Endothelial cell of umbilical vein (primary cell): ENCODE measurements at regions of chr3 and their contacts with region 1.

Region 1: DNA sequence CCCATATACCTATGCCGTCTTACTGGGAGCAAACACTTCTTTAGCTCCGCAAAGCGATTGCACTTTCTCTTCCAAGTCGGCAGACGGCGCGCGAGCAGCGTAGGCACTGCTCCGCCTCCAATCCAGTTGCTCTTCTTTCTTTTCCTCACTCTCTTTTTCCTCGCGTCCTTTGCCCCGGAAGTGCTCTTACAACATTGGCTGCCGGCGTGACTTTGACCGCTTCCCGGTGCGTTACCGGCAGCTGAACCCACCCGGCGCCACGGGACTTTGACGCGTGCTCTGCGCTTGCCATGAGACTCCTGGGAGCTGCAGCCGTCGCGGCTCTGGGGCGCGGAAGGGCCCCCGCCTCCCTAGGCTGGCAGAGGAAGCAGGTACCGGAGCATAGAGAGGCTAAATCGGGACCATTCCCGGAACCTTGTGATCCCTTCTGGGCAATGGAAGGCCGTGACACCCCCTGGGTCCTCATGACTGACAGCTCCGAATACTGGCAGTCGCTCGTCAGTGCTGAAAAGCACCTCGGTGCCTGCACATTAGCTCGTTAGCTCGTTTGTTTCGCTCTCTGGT is at the start of gene GFM1:
- DNase-seq: peak; percentile 97
- H3K4me3 ChIP-seq: peak within 1 kb of the TSS; percentile 41 to 95 (median 74)
- H3K27ac ChIP-seq: peak within 1 kb of the TSS; percentile 60
- H3K4me1 ChIP-seq: peaks cover 17% of the 10 kb centered on the region
- H3K27me3 ChIP-seq: no peaks in the 10 kb centered on the region
- CTCF ChIP-seq: peak; percentile 88 to 93
- POLR2A ChIP-seq: peak; percentile 72
- total RNA-seq, gene GFM1: 60.1 and 68.6 TPM in 2 replicates

Region 2: DNA sequence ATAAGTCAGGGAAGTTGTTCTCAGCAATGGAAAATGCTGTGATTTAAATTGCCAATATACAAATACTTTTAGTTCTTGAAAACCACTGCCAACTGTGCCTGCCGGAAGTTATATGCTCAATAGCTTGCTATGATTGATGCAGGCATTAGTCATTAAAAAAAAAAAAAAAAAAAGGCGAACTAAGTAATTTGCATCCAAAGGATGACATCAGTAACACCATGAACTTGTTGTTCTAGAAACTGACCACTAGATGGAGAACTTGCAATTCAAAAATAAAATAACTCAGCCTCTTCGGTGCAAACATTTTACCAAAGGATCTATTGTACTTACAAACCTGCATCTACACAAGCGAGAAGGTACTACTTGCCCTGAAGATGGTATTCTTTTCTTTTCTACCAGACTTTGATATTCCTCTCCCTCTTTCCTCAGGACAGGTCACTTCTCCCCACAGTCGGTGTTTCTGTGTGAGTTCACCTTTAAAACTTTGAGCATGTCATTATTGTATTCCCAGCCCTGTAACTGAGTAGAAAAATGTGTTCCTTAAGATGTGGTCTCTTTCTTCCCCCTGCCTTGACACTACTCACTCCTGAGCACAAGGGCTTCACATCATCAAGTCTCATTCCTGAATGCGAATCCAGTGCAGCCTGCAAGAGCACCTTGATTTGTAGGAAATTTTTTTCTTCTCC is 1026.2 kb before region 1 on chr3:
- CTCF ChIA-PET with region 1: interaction called, 3 read pairs
- POLR2A ChIA-PET with region 1: no interaction called
- dilution Hi-C with region 1: no loop called
- intact Hi-C with region 1: loop called (anchors 2 kb)
- DNase-seq: peak; percentile 66
- H3K4me3 ChIP-seq: no peak overlapping the region
- H3K27ac ChIP-seq: no peak overlapping the region
- H3K4me1 ChIP-seq: peaks cover 3% of the 10 kb centered on the region
- H3K27me3 ChIP-seq: peaks cover 2 to 44% of the 10 kb centered on the region in 2 experiments
- CTCF ChIP-seq: peak; percentile 38 to 45
- POLR2A ChIP-seq: no peak

Region 3: DNA sequence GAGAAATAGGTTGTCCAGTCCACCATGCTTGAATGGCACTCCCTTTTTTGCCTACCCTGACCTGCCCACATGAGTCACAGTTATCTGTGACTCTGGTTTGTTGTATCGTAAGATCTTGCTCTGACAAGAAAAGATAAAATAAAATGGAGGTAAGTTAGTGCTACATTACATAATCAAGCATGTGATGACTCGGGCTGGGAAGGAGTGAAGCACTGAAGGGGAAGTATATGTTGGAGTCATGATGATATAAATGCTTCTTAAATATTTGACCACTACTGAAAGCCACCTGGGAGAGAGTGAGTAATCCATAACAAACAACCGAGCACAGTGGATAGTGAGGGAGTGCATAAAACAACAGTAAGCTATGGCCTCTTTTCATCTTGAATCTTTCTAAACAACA is 662.6 kb before region 1 on chr3:
- CTCF ChIA-PET with region 1: no interaction called
- POLR2A ChIA-PET with region 1: no interaction called
- dilution Hi-C with region 1: no loop called
- intact Hi-C with region 1: no loop called
- DNase-seq: no peak
- H3K4me3 ChIP-seq: no peak overlapping the region
- H3K27ac ChIP-seq: no peak overlapping the region
- H3K4me1 ChIP-seq: no peaks in the 10 kb centered on the region
- H3K27me3 ChIP-seq: no peaks in the 10 kb centered on the region
- CTCF ChIP-seq: no peak
- POLR2A ChIP-seq: no peak

Region 4: DNA sequence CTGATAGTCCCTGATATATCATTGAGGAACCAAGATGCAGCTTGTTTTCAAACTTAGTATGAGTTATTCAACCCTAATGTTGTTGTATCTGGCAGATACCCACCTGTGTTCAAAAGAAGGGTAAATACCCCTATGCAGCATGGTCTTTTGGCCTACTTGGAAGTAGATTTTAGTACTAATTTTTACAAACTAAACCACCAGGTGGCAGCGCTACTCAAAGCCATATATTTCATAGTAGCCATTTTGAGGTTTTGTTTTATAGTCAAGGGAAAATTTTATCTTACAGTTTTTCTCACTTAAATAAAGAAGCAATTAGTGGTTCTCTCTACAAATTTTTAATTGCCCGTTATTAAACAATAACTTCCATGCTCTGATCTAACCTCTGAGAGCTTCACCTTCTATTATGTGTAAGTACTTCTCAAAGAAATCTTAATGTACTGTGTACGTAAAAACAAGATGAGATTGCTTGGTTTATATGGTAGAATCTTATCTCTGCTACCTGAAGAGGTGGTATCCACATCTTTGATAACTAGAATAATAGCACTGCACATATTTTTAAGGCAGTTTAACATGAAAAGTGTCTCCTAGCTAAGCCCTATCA is 104.9 kb before region 1 on chr3:
- CTCF ChIA-PET with region 1: interaction called, 9 read pairs
- POLR2A ChIA-PET with region 1: no interaction called
- dilution Hi-C with region 1: no loop called
- intact Hi-C with region 1: loop called (anchors 5 kb)
- DNase-seq: peak; percentile 70
- H3K4me3 ChIP-seq: no peak overlapping the region
- H3K27ac ChIP-seq: no peak overlapping the region
- H3K4me1 ChIP-seq: no peaks in the 10 kb centered on the region
- H3K27me3 ChIP-seq: no peaks in the 10 kb centered on the region
- CTCF ChIP-seq: peak; percentile 37 to 41
- POLR2A ChIP-seq: no peak

Region 5: DNA sequence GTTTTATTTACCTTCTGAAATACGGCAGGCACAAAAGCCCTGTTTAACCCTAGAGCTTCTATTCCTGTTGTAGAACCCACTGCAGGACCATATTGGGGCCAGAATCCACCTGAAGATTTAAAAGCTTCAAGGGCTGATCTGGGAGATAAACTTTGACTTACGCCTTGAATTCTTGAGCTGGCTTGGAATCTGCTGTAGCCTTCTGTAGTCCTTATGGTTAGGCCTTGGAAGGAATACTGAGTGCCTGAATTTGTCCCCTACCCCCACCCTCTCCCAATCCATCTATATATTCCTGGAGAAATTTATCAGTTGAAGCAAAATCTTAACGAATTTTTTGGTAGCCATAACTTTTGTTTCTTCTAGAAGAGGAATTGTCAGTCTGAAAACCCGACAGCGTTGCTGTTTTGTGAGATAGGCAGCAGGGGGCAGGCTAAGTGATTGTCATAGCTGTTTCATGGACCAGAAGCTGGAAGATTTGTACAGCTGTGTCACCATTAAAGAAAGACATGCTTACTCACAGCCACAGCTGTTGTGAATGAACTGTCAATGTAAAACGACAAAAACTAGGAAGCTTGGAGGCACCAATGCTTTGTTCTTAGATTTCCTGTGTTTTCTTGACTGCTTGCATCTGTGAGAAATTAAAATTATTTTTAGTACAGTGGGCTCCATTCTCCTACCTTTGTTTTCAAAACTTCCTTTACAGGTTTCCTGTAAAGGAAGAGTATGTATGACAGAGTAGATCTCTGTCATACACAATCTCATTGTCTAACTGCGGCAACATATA is 15.2 kb after region 1 on chr3:
- CTCF ChIA-PET with region 1: interaction called, 35 read pairs
- POLR2A ChIA-PET with region 1: interaction called, 5 read pairs
- dilution Hi-C with region 1: no loop called
- intact Hi-C with region 1: no loop called
- DNase-seq: peak; percentile 95
- H3K4me3 ChIP-seq: no peak overlapping the region
- H3K27ac ChIP-seq: peak overlapping the region; percentile 95
- H3K4me1 ChIP-seq: peaks cover 28% of the 10 kb centered on the region
- H3K27me3 ChIP-seq: no peaks in the 10 kb centered on the region
- CTCF ChIP-seq: peak; percentile 75 to 77
- POLR2A ChIP-seq: no peak

Region 6: DNA sequence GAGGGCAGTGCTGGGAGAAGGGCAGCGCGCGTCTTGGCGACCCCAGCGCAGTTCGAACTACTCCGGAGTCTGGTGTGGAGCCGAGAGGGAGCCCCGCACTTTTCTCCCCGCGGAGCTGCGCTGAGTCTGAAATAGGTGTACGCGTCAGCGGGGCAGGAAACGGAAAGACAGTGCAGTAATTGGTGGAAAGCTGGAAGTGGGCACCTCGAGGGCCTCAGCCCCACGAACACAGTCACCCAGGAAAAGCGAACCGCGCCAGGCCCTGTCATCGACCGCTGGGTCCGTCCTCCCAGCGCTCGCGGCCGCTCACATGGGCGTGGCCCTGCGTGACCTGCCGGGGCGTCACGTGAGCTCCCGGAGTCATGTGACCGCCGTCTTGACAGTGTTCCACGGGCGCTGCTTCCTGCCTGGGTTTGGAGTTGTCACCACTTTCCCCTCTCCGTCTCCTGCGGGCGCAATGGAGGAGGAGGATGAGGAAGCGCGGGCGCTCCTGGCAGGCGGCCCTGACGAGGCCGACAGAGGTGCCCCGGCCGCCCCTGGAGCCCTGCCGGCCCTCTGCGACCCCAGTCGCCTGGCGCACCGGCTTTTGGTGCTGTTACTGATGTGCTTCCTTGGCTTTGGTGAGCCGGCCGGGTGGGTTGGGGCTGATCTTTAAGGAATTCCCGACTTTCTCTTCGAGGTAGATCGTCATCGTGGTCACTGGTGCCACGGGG is 157.4 kb after region 1 on chr3 and contains the start of gene MFSD1:
- CTCF ChIA-PET with region 1: interaction called, 10 read pairs
- POLR2A ChIA-PET with region 1: no interaction called
- dilution Hi-C with region 1: no loop called
- intact Hi-C with region 1: no loop called
- DNase-seq: peak; percentile 87
- H3K4me3 ChIP-seq: peak within 1 kb of the TSS; percentile 47 to 78 (median 72)
- H3K27ac ChIP-seq: peak within 1 kb of the TSS; percentile 27
- H3K4me1 ChIP-seq: peaks cover 16% of the 10 kb centered on the region
- H3K27me3 ChIP-seq: no peaks in the 10 kb centered on the region
- CTCF ChIP-seq: no peak
- POLR2A ChIP-seq: peak; percentile 87
- total RNA-seq, gene MFSD1: 38.2 and 38.3 TPM in 2 replicates